ENCODE measurements at regions of chrX and their contacts with region 1.

Region 1: DNA sequence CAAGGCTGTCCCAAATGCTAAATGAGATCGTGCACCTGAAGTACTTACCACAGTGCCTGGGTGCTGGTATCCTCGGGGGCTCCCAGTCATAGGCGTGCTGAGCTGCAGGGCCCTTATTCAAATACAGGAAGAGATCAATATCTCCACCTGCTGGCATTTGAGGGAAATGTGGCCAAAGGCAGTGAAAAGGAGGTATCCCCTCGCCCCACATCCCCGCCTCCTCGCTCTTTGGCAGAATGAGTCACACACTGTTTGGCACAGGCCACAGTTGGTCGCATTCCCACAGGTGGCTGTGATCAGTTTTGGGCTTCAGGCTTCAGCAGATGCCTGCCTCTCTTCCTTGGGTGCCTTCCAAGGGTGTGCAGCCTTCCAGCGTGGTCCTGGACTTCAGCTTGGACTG is 28.4 kb downstream of the ZNF185 start:
- DNase-seq: peak; percentile 70
- H3K4me3 Mint-ChIP-seq: no peak overlapping the region
- H3K27ac Mint-ChIP-seq: no peak overlapping the region
- H3K4me1 Mint-ChIP-seq: peaks cover 6% of the 10 kb centered on the region
- H3K27me3 Mint-ChIP-seq: no peaks in the 10 kb centered on the region

Region 2: GRCh38 chrX:152830312-152831305 is 95.7 kb before region 1 on chrX and contains the starts of genes CETN2 and NSDHL:
- CTCF ChIA-PET with region 1: no interaction called
- intact Hi-C with region 1: loop called (anchors 1 kb)
- DNase-seq: peak; percentile 95
- H3K4me3 Mint-ChIP-seq: peak within 1 kb of the TSS; percentile 88
- H3K27ac Mint-ChIP-seq: peak within 1 kb of the TSS; percentile 81
- H3K4me1 Mint-ChIP-seq: peaks cover 26% of the 10 kb centered on the region
- H3K27me3 Mint-ChIP-seq: no peaks in the 10 kb centered on the region
- total RNA-seq, gene CETN2: 10.1 to 11.9 TPM
- total RNA-seq, gene NSDHL: 13.3 to 16.2 TPM

Region 3: GRCh38 chrX:152904151-152905080 is 21.9 kb before region 1 on chrX:
- CTCF ChIA-PET with region 1: interaction called, 10 read pairs
- intact Hi-C with region 1: loop called (anchors 1 kb)
- DNase-seq: peak; percentile 54
- H3K4me3 Mint-ChIP-seq: no peak overlapping the region
- H3K27ac Mint-ChIP-seq: no peak overlapping the region
- H3K4me1 Mint-ChIP-seq: peaks cover 2% of the 10 kb centered on the region
- H3K27me3 Mint-ChIP-seq: no peaks in the 10 kb centered on the region

Region 4: GRCh38 chrX:152958524-152959465 is 32.5 kb after region 1 on chrX:
- CTCF ChIA-PET with region 1: no interaction called
- intact Hi-C with region 1: no loop called
- DNase-seq: peak; percentile 93
- H3K4me3 Mint-ChIP-seq: peak overlapping the region; percentile 63
- H3K27ac Mint-ChIP-seq: peak overlapping the region; percentile 89
- H3K4me1 Mint-ChIP-seq: peaks cover 3% of the 10 kb centered on the region
- H3K27me3 Mint-ChIP-seq: no peaks in the 10 kb centered on the region